AG04449 (cell line): ENCODE measurements at regions of chr20 and their contacts with region 1.

Region 1: DNA sequence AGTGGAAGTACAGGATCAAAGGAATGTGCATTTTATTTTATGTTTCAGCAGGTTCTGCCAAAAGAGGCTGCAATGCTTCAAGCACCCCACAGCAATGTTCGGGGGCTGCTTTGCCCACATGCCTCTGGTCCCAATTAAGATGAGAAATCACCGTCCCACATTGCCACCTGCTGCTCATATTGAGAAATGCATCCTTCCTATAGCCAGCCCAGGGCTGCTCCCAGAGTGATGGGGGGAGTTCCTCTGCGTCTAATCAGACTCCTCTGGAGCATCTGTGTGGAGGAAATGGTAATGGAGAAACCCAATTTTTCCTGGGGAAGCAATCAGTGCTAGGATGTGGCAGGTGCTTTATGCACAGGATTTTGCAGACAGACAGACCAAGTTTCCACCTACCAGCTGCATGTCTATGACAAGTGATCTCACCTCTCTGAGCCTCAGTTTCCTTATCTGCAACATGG is 33.7 kb downstream of the PTGIS start:
- DNase-seq: no peak
- H3K4me3 ChIP-seq: no peak overlapping the region
- CTCF ChIP-seq: peak; percentile 74

Region 2: GRCh38 chr20:49328790-49329189 is 205.5 kb before region 1 on chr20:
- CTCF ChIA-PET with region 1: interaction called, 144 read pairs
- POLR2A ChIA-PET with region 1: no interaction called
- DNase-seq: no peak
- H3K4me3 ChIP-seq: no peak overlapping the region
- CTCF ChIP-seq: no peak

Region 3: GRCh38 chr20:49338061-49338460 is 196.2 kb before region 1 on chr20:
- CTCF ChIA-PET with region 1: interaction called, 144 read pairs
- POLR2A ChIA-PET with region 1: no interaction called
- DNase-seq: no peak
- H3K4me3 ChIP-seq: no peak overlapping the region
- CTCF ChIP-seq: no peak

Region 4: GRCh38 chr20:49516916-49517789 is 17.1 kb before region 1 on chr20:
- CTCF ChIA-PET with region 1: interaction called, 11 read pairs
- POLR2A ChIA-PET with region 1: no interaction called
- DNase-seq: no peak
- H3K4me3 ChIP-seq: no peak overlapping the region
- CTCF ChIP-seq: no peak